Endothelial cell of umbilical vein (primary cell): ENCODE measurements at regions of chr1 and their contacts with region 1.

Region 1: GRCh38 chr1:225777583-225778336 is at the start of gene SRP9:
- DNase-seq: peak; percentile 99
- H3K4me3 ChIP-seq: peak within 1 kb of the TSS; percentile 68 to 100 (median 83)
- H3K27ac ChIP-seq: peak within 1 kb of the TSS; percentile 95
- H3K4me1 ChIP-seq: peaks cover 23% of the 10 kb centered on the region
- H3K27me3 ChIP-seq: no peaks in the 10 kb centered on the region
- CTCF ChIP-seq: peak; percentile 94 to 98
- POLR2A ChIP-seq: peak; percentile 85
- total RNA-seq, gene SRP9: 283 and 292 TPM in 2 replicates

Region 2: GRCh38 chr1:225508538-225509375 is 269.0 kb before region 1 on chr1:
- CTCF ChIA-PET with region 1: interaction called, 19 read pairs
- POLR2A ChIA-PET with region 1: interaction called, 4 read pairs
- dilution Hi-C with region 1: no loop called
- intact Hi-C with region 1: no loop called
- DNase-seq: peak; percentile 97
- H3K4me3 ChIP-seq: no peak overlapping the region
- H3K27ac ChIP-seq: peak overlapping the region; percentile 72
- H3K4me1 ChIP-seq: peaks cover 23% of the 10 kb centered on the region
- H3K27me3 ChIP-seq: no peaks in the 10 kb centered on the region
- CTCF ChIP-seq: no peak
- POLR2A ChIP-seq: no peak

Region 3: DNA sequence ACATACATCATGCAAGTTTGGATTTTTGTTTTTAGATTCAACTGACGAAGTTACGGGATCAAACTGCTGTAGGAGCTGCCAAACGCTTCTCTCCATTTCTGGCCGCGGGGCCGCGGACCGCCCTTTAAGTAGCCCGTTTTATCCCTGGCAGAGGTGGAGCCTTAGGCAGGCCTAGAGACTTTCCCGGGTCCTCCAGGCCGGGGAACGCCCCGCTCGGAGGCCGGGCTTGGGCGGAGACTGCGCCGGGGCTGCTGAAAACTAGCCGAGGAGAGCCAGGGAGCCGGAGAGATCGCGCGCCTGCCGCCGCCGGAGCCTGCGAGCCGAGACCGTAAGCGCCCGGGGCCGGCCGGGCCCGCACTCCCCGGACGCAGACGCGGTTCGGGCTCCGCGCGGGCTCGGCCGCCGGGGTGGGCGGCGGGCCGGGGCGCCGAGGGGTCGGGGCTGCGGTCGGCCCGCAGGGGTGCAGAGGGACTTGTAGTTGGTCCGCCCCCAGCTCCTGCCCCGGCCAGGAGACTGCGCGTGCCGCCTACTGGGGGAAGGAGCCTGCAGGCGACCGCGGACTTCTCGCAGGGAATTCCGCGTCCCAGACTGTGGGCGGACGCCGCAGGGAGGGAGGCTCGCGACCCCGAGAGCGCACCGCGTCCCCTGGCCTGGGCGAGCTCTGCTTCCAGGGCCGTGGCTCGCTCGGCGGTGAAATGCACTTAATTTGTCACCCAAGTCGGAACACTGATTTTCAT is 32.2 kb after region 1 on chr1 and contains the start of gene EPHX1:
- CTCF ChIA-PET with region 1: interaction called, 21 read pairs
- POLR2A ChIA-PET with region 1: interaction called, 13 read pairs
- dilution Hi-C with region 1: no loop called
- intact Hi-C with region 1: loop called (anchors 1 kb)
- DNase-seq: peak; percentile 85
- H3K4me3 ChIP-seq: peak within 1 kb of the TSS in 2 of 3 experiments; percentile 43 to 70
- H3K27ac ChIP-seq: no peak within 1 kb of the TSS
- H3K4me1 ChIP-seq: peaks cover 8% of the 10 kb centered on the region
- H3K27me3 ChIP-seq: no peaks in the 10 kb centered on the region
- CTCF ChIP-seq: peak in 1 of 2 donors; percentile 40
- POLR2A ChIP-seq: peak; percentile 96
- total RNA-seq, gene EPHX1: 19.1 and 23.7 TPM in 2 replicates

Region 4: GRCh38 chr1:225923692-225924555 is 146.2 kb after region 1 on chr1 and contains the start of gene PYCR2:
- CTCF ChIA-PET with region 1: interaction called, 3 read pairs
- POLR2A ChIA-PET with region 1: no interaction called
- dilution Hi-C with region 1: no loop called
- intact Hi-C with region 1: loop called (anchors 1 kb)
- DNase-seq: peak; percentile 97
- H3K4me3 ChIP-seq: peak within 1 kb of the TSS; percentile 15 to 69 (median 59)
- H3K27ac ChIP-seq: peak within 1 kb of the TSS; percentile 69
- H3K4me1 ChIP-seq: peaks cover 19% of the 10 kb centered on the region
- H3K27me3 ChIP-seq: no peaks in the 10 kb centered on the region
- CTCF ChIP-seq: no peak
- POLR2A ChIP-seq: peak; percentile 94
- total RNA-seq, gene PYCR2: 60.4 and 64.6 TPM in 2 replicates

Region 5: DNA sequence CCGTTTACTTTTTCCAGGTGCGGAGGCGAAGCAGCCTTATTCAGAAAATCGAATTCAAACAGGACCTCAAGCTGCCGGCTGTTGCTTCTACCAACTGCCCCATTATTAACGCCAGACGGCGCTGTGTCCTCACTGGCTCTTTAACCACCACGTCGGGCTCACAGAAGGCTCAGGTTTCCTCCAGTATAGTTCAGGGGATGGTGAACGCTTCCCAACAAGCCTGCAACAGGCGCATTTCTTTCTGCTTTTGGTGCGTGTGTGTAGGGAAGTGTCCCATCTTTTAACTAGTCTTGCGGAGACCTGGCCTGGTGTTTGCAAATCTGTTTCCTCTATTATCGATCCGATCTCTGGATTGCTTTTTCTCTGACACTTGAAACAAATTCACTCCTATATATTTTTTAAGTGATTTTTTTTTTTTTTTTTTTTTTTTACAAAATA is 770.0 kb after region 1 on chr1:
- CTCF ChIA-PET with region 1: no interaction called
- POLR2A ChIA-PET with region 1: no interaction called
- dilution Hi-C with region 1: no loop called
- intact Hi-C with region 1: no loop called
- DNase-seq: peak; percentile 85
- H3K4me3 ChIP-seq: no peak overlapping the region
- H3K27ac ChIP-seq: no peak overlapping the region
- H3K4me1 ChIP-seq: peaks cover 2% of the 10 kb centered on the region
- H3K27me3 ChIP-seq: peaks cover 46 to 63% of the 10 kb centered on the region in 2 experiments
- CTCF ChIP-seq: peak; percentile 86 to 93
- POLR2A ChIP-seq: no peak